Mammary epithelial cell (primary cell): ENCODE measurements at regions of chr7 and their contacts with region 1.

Region 1: DNA sequence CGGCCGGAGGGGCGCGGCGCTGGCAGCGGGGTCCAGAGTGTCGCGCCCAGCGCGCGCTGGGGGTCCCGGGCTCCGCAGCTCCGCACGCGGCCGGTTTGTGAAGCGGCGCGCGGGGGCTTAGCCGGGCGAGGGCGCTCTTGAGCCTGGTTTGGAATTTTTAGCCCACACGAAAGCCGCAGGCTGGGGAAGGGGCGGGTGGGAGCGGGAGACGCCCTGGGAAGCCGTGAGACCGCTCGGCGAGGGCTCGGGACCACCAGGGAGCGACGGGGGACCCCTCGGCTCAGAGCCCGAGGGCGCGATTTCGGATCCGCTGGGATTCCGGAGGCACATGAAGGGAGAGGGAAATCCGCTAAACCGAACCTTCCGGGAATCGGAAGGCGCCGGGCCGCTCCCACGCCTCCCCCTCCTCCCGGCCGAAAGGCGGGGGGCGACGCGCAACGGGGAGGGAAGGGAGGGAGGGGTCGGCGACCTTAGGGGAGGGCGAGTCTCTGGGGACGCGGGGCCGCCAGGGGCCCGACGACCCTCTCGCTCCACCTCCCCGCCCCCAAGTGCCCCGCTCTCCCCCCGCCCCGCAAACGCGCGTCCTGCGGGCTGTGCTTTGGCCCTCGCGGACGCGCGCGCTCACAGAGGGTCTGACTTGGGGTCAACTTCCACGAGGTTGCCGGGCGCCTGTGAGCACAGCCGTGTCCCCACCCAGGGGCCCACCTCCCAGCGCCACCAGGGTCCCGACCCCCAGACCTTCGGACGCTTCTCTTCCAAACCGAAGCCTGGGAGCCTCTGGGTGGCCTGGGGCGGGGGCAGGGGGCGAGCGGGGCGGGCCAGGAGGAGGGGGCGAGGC is 5.1 kb upstream of the ELFN1 start:
- DNase-seq: peak; percentile 30
- H3K4me3 ChIP-seq: peak overlapping the region in 2 of 3 experiments; percentile 29 to 43
- H3K27ac ChIP-seq: no peak overlapping the region
- H3K4me1 ChIP-seq: peaks cover 9% of the 10 kb centered on the region
- H3K27me3 ChIP-seq: peaks cover 32% of the 10 kb centered on the region
- CTCF ChIP-seq: peak; percentile 47 to 73

Region 2: GRCh38 chr7:1532483-1533424 is 132.2 kb before region 1 on chr7:
- CTCF ChIA-PET with region 1: no interaction called
- dilution Hi-C with region 1: no loop called
- in situ Hi-C with region 1: no loop called
- intact Hi-C with region 1: no loop called
- DNase-seq: peak; percentile 24
- H3K4me3 ChIP-seq: no peak overlapping the region
- H3K27ac ChIP-seq: no peak overlapping the region
- H3K4me1 ChIP-seq: peaks cover 37% of the 10 kb centered on the region
- H3K27me3 ChIP-seq: no peaks in the 10 kb centered on the region
- CTCF ChIP-seq: no peak

Region 3: DNA sequence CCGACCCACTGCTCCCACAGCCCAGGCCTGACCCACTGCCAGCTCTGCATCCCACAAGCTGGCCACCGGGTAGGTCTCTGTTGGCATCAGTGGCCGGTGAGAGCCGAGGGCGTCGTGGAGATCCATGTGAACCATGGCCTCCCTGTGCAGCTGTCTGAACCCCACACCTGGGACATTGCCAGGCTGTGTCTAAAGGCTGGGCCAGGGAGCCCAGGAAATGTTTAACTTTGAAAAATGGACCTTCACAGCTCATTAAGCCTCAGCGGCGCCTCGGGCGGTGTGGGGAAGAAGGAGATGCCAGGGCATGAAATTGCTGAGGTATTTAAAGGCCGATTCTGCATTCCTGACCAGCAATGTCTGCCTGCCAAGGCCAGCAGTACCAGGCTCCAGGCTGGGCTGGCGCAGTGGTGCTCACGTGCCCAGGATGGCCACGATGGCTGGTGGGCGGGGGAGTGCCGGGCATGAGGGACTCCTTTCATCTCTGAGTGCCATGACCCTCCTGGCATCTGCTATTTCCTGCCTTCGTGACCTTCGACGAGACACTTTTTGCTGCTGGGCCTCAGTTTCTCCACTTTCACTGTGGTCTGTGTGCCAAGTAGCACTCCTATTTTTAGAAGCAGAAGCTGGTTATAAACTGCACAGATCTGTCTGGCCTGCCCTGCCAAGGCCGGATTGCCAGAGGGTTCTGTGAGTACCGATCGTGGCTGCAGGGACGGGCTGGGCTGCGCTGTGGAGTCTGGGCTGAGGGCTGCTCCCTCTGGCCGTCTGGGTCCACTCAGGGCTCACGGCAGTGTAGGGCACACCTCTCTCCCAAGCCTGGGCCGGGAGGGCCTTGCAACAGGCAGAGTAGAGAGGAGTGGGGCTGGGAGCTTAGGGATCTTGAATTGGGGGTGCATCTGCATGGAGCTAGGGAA is 26.9 kb after region 1 on chr7:
- CTCF ChIA-PET with region 1: interaction called, 14 read pairs
- dilution Hi-C with region 1: no loop called
- in situ Hi-C with region 1: no loop called
- intact Hi-C with region 1: no loop called
- DNase-seq: peak; percentile 59
- H3K4me3 ChIP-seq: no peak overlapping the region
- H3K27ac ChIP-seq: no peak overlapping the region
- H3K4me1 ChIP-seq: peaks cover 10% of the 10 kb centered on the region
- H3K27me3 ChIP-seq: no peaks in the 10 kb centered on the region
- CTCF ChIP-seq: no peak

Region 4: DNA sequence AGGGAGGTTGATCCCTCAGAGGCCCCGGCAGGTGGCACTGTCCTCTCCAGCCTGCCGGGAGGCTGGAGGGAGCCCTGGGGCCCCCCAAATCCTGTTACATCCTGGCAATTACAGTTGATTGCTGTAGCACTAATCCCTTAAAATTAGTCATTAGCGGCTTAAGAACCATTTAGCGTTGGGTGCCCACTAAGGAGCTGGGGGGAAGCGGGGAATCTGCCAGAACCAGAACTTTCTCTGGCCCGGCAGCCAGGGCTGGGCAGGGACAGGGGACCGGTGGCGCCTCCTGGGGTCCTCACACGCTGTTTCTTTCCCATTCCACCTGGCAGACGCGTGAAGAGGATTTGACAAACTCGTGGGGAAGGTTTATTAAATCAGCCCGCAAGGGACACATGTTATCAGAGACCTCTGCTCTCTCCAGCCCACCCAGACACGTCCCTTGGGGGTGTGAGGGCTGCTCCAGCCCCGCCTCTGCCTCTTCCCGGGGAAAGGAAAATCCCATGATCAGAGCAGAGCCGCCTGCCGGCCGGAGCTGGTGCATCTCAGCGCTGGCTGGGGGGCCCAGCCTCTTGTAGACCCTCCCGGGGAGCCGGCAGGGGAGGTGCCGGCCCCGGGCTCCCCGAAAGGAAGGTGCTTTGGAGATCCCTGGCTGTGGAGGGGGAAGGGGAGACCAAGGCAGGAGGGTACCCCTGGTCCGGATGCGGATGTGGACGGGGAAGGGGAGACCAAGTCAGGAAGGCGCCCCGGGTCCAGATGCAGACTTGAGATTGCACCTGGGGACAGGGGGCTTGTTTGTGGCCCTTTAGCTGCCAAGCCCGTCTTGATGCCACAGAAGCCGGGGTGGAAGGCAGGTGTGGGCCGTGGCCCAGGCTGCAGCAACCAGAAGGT is 147.8 kb after region 1 on chr7:
- CTCF ChIA-PET with region 1: no interaction called
- dilution Hi-C with region 1: no loop called
- in situ Hi-C with region 1: no loop called
- intact Hi-C with region 1: loop called (anchors 5 kb)
- DNase-seq: peak; percentile 8
- H3K4me3 ChIP-seq: no peak overlapping the region
- H3K27ac ChIP-seq: no peak overlapping the region
- H3K4me1 ChIP-seq: no peaks in the 10 kb centered on the region
- H3K27me3 ChIP-seq: no peaks in the 10 kb centered on the region
- CTCF ChIP-seq: peak; percentile 1 to 67

Region 5: GRCh38 chr7:2209146-2209960 is 544.4 kb after region 1 on chr7:
- CTCF ChIA-PET with region 1: no interaction called
- dilution Hi-C with region 1: no loop called
- in situ Hi-C with region 1: no loop called
- intact Hi-C with region 1: loop called (anchors 1 kb)
- DNase-seq: peak; percentile 11
- H3K4me3 ChIP-seq: no peak overlapping the region
- H3K27ac ChIP-seq: no peak overlapping the region
- H3K4me1 ChIP-seq: peaks cover 5% of the 10 kb centered on the region
- H3K27me3 ChIP-seq: no peaks in the 10 kb centered on the region
- CTCF ChIP-seq: peak; percentile 61 to 75